ENCODE measurements at regions of chr7 and their contacts with region 1.

Region 1: GRCh38 chr7:36670585-36671431 is 53.5 kb downstream of the AOAH start:
- DNase-seq: peak; percentile 81
- H3K4me3 Mint-ChIP-seq: no peak overlapping the region
- H3K27ac Mint-ChIP-seq: no peak overlapping the region
- H3K4me1 Mint-ChIP-seq: peaks cover 34% of the 10 kb centered on the region
- H3K27me3 Mint-ChIP-seq: peaks cover 2% of the 10 kb centered on the region

Region 2: DNA sequence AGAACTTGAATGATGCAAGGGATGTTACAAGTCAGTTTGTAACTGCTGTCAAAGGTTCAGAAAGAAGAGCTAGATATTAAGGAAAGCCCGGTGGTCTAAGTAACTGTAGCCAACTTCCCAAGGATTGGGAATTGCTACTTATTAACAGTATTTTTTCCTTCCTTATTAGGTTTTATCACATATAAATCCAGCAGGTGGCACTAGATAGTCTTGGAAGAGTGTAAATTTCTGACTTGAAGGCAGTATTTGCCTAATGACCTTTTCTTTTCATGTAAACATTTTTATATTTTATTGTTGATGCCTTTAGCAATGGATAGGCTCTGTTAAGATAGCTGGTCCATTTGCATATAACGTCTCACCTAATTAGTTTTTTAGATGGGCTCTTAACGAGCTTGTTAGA is 229.9 kb before region 1 on chr7:
- CTCF ChIA-PET with region 1: interaction called, 30 read pairs
- POLR2A ChIA-PET with region 1: no interaction called
- intact Hi-C with region 1: no loop called
- DNase-seq: no peak
- H3K4me3 Mint-ChIP-seq: no peak overlapping the region
- H3K27ac Mint-ChIP-seq: no peak overlapping the region
- H3K4me1 Mint-ChIP-seq: no peaks in the 10 kb centered on the region
- H3K27me3 Mint-ChIP-seq: no peaks in the 10 kb centered on the region

Region 3: GRCh38 chr7:36473454-36474282 is 197.1 kb before region 1 on chr7:
- CTCF ChIA-PET with region 1: interaction called, 24 read pairs
- POLR2A ChIA-PET with region 1: no interaction called
- intact Hi-C with region 1: loop called (anchors 5 kb)
- DNase-seq: peak; percentile 57
- H3K4me3 Mint-ChIP-seq: no peak overlapping the region
- H3K27ac Mint-ChIP-seq: no peak overlapping the region
- H3K4me1 Mint-ChIP-seq: peaks cover 15% of the 10 kb centered on the region
- H3K27me3 Mint-ChIP-seq: no peaks in the 10 kb centered on the region

Region 4: DNA sequence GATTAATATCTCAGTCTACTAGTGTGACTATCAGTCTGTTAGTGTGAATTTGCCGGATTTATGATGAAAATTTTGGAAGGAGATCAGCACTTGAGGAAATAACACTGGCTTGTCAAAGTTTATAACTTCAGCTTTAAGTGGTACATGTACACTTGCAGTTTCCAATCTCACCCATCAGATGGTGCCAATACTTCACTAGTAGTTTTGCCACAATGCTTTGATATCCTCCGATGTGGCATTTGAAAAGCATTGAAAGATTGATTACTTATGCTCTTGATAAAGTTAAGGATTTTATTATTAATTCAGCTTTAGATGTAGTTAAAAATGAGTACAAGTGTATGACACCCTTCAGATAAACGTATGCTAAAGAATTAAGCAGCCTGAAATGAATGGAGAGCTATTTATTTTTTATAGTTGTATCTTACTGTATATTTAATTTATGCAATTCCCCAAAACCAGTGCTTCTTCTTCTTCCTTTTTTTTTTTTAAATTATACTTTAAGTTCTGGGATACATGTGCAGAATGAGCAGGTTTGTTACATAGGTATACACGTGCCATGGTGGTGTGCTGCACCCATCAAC is 183.0 kb before region 1 on chr7:
- CTCF ChIA-PET with region 1: interaction called, 70 read pairs
- POLR2A ChIA-PET with region 1: interaction called, 3 read pairs
- intact Hi-C with region 1: loop called (anchors 1 kb)
- DNase-seq: no peak
- H3K4me3 Mint-ChIP-seq: no peak overlapping the region
- H3K27ac Mint-ChIP-seq: no peak overlapping the region
- H3K4me1 Mint-ChIP-seq: peaks cover 2% of the 10 kb centered on the region
- H3K27me3 Mint-ChIP-seq: peaks cover 2% of the 10 kb centered on the region

Region 5: DNA sequence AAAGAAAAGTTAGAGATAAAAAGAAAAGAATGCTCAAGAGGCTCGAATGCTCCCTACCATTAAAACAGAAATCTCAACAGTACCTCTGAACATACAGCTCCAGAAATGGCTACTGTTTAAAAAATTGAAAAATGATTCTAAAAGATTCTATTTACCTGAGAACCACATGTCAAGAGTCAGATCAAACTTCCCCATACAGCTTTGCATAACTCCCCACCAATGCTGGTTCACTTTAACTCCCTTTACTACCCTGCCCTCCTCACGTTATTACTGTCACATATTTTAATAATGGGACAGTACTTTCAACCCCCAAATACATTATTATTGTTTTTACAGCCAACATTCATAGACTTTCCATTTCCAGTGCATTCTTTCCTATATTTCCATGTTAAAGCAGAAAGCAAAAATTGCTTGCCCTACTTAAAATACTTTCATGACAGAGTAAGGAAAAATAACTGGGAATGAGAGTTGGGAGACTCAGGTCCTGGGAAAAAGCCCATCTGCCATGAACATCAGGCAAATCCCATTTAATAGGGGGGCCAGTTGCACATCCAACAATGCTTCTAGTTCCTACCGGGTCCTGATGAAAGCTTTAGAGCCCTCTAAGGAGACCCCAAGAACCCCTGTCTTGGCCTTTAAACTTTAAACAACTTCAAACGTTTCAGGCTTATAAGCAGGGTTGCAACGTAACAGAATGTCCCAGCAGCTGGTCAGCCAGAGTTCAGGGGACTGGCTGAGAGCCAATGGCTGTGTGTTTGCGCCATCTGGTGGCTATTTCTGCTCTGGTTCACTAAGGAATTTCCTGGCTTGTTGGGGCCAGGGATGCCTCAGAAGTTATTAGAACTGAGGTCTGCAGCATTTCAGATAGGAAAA is 530.4 kb after region 1 on chr7:
- CTCF ChIA-PET with region 1: interaction called, 15 read pairs
- POLR2A ChIA-PET with region 1: no interaction called
- intact Hi-C with region 1: no loop called
- DNase-seq: peak; percentile 62
- H3K4me3 Mint-ChIP-seq: no peak overlapping the region
- H3K27ac Mint-ChIP-seq: no peak overlapping the region
- H3K4me1 Mint-ChIP-seq: peaks cover 11% of the 10 kb centered on the region
- H3K27me3 Mint-ChIP-seq: no peaks in the 10 kb centered on the region

Measured in activated CD4-positive, alpha-beta memory T cell treated with anti-CD3 and anti-CD28 coated beads for 36 hours (primary cell).